ENCODE measurements at regions of chr5 and their contacts with region 1.

Region 1: GRCh38 chr5:146273109-146273508 is 65.5 kb upstream of the POU4F3 start:
- DNase-seq: no peak
- H3K4me3 ChIP-seq: no peak overlapping the region
- H3K27ac ChIP-seq: no peak overlapping the region
- H3K4me1 ChIP-seq: no peaks in the 10 kb centered on the region
- H3K27me3 ChIP-seq: no peaks in the 10 kb centered on the region
- CTCF ChIP-seq: no peak

Region 2: DNA sequence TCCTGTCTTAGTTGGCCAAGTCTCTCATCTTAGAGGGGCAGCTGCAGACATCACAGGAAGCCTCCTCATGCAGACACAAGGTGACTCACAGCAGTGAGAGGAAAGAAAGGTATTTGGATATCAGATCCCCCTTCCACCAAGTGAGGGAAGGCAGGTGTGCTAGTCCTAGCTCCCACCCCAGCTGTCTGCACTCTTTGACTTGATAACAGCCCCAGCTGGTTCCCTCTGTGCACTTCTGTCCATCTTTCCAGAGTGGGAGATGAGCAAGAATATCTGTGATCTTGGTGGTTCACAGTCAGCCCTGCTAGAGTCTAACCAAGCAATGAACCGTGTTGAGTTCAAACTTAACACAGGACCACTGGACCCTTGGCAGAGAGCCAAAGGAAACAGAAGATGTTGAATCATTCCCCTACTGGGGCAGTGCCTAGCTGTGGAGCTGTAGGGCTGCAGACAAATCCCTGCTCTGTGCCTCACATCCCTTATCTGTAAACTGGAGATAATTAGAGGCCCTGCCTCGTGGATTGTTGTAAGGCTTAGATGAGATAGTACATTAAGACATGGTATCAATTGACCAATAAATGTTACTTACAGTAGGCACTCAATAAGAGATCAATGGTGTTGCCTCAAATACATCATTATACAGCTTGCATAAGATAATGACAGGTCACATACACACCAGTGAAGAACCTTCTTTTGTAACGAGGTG is 297.6 kb before region 1 on chr5:
- CTCF ChIA-PET with region 1: no interaction called
- POLR2A ChIA-PET with region 1: no interaction called
- intact Hi-C with region 1: no loop called
- DNase-seq: no peak
- H3K4me3 ChIP-seq: no peak overlapping the region
- H3K27ac ChIP-seq: no peak overlapping the region
- H3K4me1 ChIP-seq: peaks cover 39% of the 10 kb centered on the region
- H3K27me3 ChIP-seq: no peaks in the 10 kb centered on the region
- CTCF ChIP-seq: no peak

Region 3: DNA sequence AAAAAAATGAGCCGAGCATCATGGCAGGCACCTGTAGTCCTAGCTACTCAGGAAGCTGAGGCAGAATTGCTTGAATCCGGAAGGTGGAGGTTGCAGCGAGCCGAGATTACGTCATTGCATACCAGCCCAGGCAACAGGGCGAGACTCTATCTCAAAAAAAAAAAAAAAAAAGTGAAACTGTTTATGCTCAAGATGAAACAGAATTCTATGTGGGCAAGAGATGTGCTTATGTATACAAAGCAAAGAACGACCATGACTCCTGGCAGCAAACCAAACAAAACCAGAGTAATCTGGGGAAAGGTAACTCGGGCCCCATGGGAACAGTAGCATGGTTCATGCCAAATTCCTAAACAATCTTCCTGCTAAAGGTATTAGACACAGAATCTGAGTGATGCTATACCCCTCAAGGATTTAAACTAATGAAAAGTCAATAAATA is 135.1 kb before region 1 on chr5:
- CTCF ChIA-PET with region 1: no interaction called
- POLR2A ChIA-PET with region 1: no interaction called
- intact Hi-C with region 1: loop called (anchors 10 kb)
- DNase-seq: no peak
- H3K4me3 ChIP-seq: no peak overlapping the region
- H3K27ac ChIP-seq: no peak overlapping the region
- H3K4me1 ChIP-seq: no peaks in the 10 kb centered on the region
- H3K27me3 ChIP-seq: no peaks in the 10 kb centered on the region
- CTCF ChIP-seq: no peak

Region 4: DNA sequence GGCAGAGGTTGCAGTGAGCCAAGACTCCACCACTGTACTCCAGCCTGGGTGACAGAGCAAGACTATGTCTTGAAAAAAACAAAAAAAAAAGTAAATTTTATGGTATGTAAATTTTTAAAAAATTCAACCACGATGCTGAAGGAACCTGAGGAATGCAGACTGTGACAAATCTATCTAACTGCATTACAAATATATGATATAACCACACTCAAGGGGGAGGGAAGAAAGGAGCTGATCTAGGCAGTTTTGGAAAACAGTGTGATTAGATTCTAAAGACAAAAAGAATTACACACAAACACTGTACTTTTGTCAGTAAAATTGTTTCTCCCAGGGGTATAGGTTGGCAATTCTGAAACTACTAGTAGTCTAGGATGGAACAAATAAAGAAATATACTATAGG is 107.6 kb before region 1 on chr5:
- CTCF ChIA-PET with region 1: no interaction called
- POLR2A ChIA-PET with region 1: no interaction called
- intact Hi-C with region 1: loop called (anchors 10 kb)
- DNase-seq: no peak
- H3K4me3 ChIP-seq: no peak overlapping the region
- H3K27ac ChIP-seq: no peak overlapping the region
- H3K4me1 ChIP-seq: no peaks in the 10 kb centered on the region
- H3K27me3 ChIP-seq: no peaks in the 10 kb centered on the region
- CTCF ChIP-seq: no peak

Region 5: DNA sequence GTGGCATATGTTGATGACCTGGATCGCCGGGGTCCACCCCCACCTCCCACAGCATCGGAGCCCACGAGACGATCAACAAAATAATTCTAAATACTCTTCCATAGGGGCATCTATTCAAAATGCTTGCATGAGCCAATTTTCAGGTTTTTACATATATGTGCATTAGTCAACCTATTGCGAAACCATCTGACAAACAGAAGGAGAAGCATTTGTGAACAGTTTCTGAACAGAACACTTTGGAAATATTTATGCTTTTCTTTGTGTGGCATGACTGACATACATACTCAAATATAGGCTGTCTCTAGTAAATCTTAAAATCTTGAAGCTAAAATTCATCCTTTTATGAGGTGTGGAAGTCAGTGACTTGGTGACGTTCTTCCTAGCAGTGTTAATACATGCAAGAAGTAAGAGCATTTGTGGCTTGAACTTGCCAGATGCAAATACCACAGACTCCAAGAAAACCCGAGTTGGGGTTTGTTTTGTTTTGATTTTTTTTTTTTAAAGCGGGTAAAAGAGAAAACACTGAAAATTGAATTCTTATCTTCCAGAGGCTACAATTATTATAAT is 237.5 kb after region 1 on chr5:
- CTCF ChIA-PET with region 1: no interaction called
- POLR2A ChIA-PET with region 1: no interaction called
- intact Hi-C with region 1: no loop called
- DNase-seq: no peak
- H3K4me3 ChIP-seq: no peak overlapping the region
- H3K27ac ChIP-seq: no peak overlapping the region
- H3K4me1 ChIP-seq: peaks cover 2% of the 10 kb centered on the region
- H3K27me3 ChIP-seq: no peaks in the 10 kb centered on the region
- CTCF ChIP-seq: no peak

Region 6: GRCh38 chr5:147464211-147464610 is 1191.1 kb after region 1 on chr5:
- CTCF ChIA-PET with region 1: no interaction called
- POLR2A ChIA-PET with region 1: no interaction called
- intact Hi-C with region 1: no loop called
- DNase-seq: peak; percentile 69
- H3K4me3 ChIP-seq: no peak overlapping the region
- H3K27ac ChIP-seq: no peak overlapping the region
- H3K4me1 ChIP-seq: no peaks in the 10 kb centered on the region
- H3K27me3 ChIP-seq: no peaks in the 10 kb centered on the region
- CTCF ChIP-seq: peak; percentile 77